WTC11 (cell line): ENCODE measurements at regions of chr9 and their contacts with region 1.

Region 1: GRCh38 chr9:7234143-7234542 is 476.4 kb downstream of the KDM4C start:
- DNase-seq: peak; percentile 85
- ATAC-seq: peak; percentile 90
- H3K4me3 Mint-ChIP-seq: no peak overlapping the region
- H3K27ac Mint-ChIP-seq: no peak overlapping the region
- H3K4me1 Mint-ChIP-seq: peaks cover 45% of the 10 kb centered on the region
- H3K27me3 Mint-ChIP-seq: no peaks in the 10 kb centered on the region; the same call in none of the 2 replicates
- CTCF ChIP-seq: peak; percentile 65

Region 2: DNA sequence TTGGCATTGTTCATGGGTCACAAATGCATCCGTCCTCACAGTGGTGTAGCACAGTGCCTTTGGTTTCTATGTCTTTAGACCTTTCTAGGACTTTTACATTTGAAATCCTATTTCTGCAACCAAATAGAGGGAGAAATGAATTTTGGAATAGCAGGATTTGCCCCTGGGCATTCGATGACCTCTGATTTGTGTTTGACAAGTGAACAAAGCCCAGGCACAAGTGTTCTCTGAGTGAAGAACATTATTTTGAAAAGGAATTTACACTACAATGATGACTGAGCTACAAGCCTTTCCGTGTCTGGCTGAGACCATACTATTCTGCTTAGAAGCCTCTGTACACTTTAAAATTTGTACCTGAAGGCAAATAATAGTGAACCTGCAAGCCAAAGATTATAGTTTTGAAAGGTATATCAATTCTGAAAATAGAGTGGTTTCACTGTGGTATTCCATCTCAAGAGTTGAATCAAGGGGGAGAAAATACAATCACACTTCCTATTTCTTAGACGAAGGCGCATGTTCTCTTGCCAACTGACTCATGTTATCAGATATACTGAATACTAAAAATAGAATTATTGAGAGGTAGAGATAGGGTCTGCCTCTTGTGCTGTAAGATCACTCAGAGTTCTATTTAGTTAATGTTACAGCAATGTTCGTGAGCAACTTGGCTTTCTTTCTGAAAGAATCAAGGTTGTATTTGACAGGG is 178.8 kb before region 1 on chr9:
- CTCF ChIA-PET with region 1: interaction called, 12 read pairs
- POLR2A ChIA-PET with region 1: no interaction called
- DNase-seq: no peak
- ATAC-seq: no peak
- H3K4me3 Mint-ChIP-seq: no peak overlapping the region
- H3K27ac Mint-ChIP-seq: no peak overlapping the region
- H3K4me1 Mint-ChIP-seq: peaks cover 31% of the 10 kb centered on the region
- H3K27me3 Mint-ChIP-seq: no peaks in the 10 kb centered on the region
- CTCF ChIP-seq: no peak

Region 3: DNA sequence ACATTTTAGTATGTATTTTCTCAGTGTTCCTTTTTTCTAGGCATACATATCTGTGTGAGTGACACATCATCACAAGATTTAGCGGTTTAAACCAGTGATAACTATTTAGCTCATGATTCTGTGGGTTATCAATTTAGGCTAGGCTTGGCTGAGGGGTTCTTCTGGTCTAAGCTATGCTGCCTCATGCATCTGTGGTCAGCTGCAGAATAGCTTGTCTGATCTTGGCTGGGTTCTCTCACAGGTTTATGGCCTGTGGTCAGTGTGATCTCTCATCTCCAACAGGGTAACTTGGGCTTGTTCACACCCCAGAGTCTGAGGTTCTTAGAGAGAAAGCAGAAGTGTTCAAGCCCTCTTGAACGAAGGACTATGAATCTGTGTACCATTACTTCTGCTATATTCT is 113.1 kb before region 1 on chr9:
- CTCF ChIA-PET with region 1: no interaction called
- POLR2A ChIA-PET with region 1: no interaction called
- DNase-seq: no peak
- ATAC-seq: no peak
- H3K4me3 Mint-ChIP-seq: no peak overlapping the region
- H3K27ac Mint-ChIP-seq: no peak overlapping the region
- H3K4me1 Mint-ChIP-seq: 0 out of 2 replicates have a peak, but pooled peaks cover 9% of the 10 kb centered on the region
- H3K27me3 Mint-ChIP-seq: no peaks in the 10 kb centered on the region
- CTCF ChIP-seq: no peak

Region 4: DNA sequence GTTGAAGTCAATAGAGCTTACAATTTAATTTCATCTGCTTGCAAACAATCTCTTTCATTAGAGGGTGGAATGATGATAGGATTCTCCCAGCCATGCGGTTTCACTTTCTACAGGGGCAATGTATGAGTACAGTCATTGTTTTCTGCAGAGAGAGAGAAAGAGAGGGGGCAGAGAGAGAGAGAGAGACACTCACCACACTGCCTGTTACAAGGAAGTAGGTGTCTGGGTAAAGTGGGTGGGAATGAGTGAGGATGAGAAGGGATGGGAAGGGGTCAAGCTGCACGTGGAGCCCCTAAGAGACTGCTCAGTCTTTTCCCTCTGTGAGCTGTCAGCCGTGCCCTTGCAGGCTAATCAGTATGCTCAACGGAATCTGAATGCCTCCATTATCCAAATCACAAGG is 22.0 kb before region 1 on chr9:
- CTCF ChIA-PET with region 1: interaction called, 25 read pairs
- POLR2A ChIA-PET with region 1: no interaction called
- DNase-seq: no peak
- ATAC-seq: no peak
- H3K4me3 Mint-ChIP-seq: no peak overlapping the region
- H3K27ac Mint-ChIP-seq: no peak overlapping the region
- H3K4me1 Mint-ChIP-seq: peaks cover 40% of the 10 kb centered on the region
- H3K27me3 Mint-ChIP-seq: peaks cover 52% of the 10 kb centered on the region
- CTCF ChIP-seq: no peak

Region 5: DNA sequence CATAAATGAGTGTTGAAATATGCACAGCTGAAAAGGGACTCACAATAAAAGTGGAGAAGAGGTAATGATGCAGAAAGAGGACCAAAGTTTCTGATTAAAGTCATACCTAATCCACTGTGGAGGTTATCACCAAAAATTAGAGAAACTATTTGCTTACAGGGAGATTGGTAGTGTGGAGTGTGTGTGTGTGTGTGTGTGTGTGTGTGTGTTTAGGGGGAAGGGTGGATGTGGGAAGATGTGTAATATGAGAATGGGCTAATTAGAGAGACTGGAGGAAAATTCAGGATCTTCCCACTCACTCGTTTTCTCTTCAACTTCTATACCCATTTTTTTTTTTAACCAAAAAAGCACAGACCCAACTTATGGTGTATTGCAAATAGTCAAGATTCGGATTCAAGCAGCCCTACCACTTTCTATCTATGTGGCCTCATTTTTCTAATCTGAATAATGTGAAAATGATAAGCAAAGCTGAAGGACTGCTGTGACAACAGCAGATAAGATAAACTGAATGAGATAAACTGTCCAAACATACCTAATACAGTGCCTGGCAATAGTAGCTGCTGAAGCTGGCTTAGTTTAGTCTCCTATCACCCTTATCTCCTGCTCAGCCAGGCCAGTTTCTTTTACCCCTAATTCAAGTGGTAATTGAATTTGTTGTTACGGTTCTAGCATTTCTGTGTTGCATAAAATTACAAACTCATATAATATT is 24.7 kb after region 1 on chr9:
- CTCF ChIA-PET with region 1: interaction called, 14 read pairs
- POLR2A ChIA-PET with region 1: no interaction called
- DNase-seq: no peak
- ATAC-seq: no peak
- H3K4me3 Mint-ChIP-seq: no peak overlapping the region
- H3K27ac Mint-ChIP-seq: no peak overlapping the region
- H3K4me1 Mint-ChIP-seq: peaks cover 12% of the 10 kb centered on the region; the same call in 1 of the 2 replicates
- H3K27me3 Mint-ChIP-seq: no peaks in the 10 kb centered on the region
- CTCF ChIP-seq: no peak

Region 6: DNA sequence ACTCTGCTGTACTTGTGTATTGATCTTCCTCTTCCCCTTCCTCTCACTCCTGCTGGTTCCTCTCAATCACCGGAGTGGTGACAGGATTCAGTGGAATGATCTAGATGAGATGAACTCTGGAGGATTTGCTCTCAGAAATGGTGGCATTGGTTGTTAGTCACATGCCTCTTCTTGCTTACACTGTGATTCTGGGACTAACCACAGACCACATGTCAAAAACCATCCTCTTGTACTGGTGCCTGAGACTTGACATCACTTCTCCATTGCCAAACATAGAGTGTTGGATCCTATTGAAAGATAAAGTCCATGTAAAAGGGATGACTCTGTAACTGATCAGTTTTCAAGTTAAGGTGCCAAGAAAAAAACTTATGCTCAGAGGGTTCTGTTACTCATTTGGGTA is 58.9 kb after region 1 on chr9:
- CTCF ChIA-PET with region 1: no interaction called
- POLR2A ChIA-PET with region 1: no interaction called
- DNase-seq: no peak
- ATAC-seq: no peak
- H3K4me3 Mint-ChIP-seq: no peak overlapping the region
- H3K27ac Mint-ChIP-seq: no peak overlapping the region
- H3K4me1 Mint-ChIP-seq: peaks cover 19% of the 10 kb centered on the region
- H3K27me3 Mint-ChIP-seq: no peaks in the 10 kb centered on the region
- CTCF ChIP-seq: no peak

Region 7: DNA sequence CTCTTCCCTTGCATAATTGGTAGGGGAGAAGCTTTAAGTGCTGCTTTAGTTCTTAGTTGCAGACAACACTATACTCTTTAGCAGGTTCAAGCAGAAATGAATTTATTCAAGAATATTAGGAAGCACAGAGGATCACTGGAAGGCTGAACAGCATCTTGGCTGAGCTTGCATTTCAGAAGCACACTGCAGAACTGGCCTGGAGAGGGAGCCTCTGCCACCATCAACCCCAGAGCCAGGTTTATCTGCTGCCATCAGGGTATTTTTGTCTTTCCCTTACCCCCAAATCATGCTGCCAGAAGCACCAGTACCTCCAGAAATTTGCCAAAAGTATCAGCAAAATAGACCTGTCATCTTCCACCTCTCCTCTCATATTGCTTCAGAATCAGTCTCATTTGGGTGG is 124.7 kb after region 1 on chr9:
- CTCF ChIA-PET with region 1: interaction called, 44 read pairs
- POLR2A ChIA-PET with region 1: no interaction called
- DNase-seq: peak; percentile 14
- ATAC-seq: peak; percentile 75
- H3K4me3 Mint-ChIP-seq: no peak overlapping the region
- H3K27ac Mint-ChIP-seq: no peak overlapping the region
- H3K4me1 Mint-ChIP-seq: peaks cover 8% of the 10 kb centered on the region
- H3K27me3 Mint-ChIP-seq: no peaks in the 10 kb centered on the region
- CTCF ChIP-seq: no peak

Region 8: DNA sequence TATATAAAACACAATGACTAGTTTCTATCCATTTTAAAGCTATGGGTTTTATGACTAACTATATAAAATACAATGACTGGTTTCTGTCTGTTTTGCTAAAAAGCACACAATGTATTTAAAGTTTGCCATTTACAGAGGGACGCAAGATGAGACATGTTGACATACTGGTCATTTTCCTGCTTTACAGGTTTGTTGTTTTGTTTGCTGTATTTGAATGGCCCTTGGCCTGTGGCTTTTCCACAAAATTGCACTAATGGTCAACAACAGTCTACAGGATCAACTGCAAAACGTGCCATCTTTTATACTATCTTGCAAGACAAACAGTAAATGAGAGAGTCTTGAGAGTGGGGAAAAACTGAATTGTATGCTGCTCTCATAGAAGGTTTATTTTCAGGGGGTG is 151.6 kb after region 1 on chr9:
- CTCF ChIA-PET with region 1: no interaction called
- POLR2A ChIA-PET with region 1: no interaction called
- DNase-seq: no peak
- ATAC-seq: no peak
- H3K4me3 Mint-ChIP-seq: no peak overlapping the region
- H3K27ac Mint-ChIP-seq: no peak overlapping the region
- H3K4me1 Mint-ChIP-seq: no peaks in the 10 kb centered on the region
- H3K27me3 Mint-ChIP-seq: no peaks in the 10 kb centered on the region
- CTCF ChIP-seq: no peak

Region 9: GRCh38 chr9:7402334-7403027 is 168.3 kb after region 1 on chr9:
- CTCF ChIA-PET with region 1: interaction called, 13 read pairs
- POLR2A ChIA-PET with region 1: no interaction called
- DNase-seq: no peak
- ATAC-seq: peak; percentile 65
- H3K4me3 Mint-ChIP-seq: peak overlapping the region; percentile 17; the same call in 1 of the 2 replicates
- H3K27ac Mint-ChIP-seq: peak overlapping the region; percentile 57
- H3K4me1 Mint-ChIP-seq: peaks cover 58% of the 10 kb centered on the region
- H3K27me3 Mint-ChIP-seq: no peaks in the 10 kb centered on the region
- CTCF ChIP-seq: no peak